Activated B cell treated with CpG ODN at 0.5 μM for 24 hours (primary cell): ENCODE measurements at regions of chr1 and their contacts with region 1.

Region 1: GRCh38 chr1:43974443-43975248 is at the start of gene ATP6V0B:
- DNase-seq: peak; percentile 91
- ATAC-seq: peak; percentile 70
- H3K4me3 Mint-ChIP-seq: peak within 1 kb of the TSS; percentile 92
- H3K27ac Mint-ChIP-seq: peak within 1 kb of the TSS; percentile 91
- H3K4me1 Mint-ChIP-seq: peaks cover 65% of the 10 kb centered on the region
- H3K27me3 Mint-ChIP-seq: no peaks in the 10 kb centered on the region
- CTCF ChIP-seq: no peak
- total RNA-seq, gene ATP6V0B: 75.5 and 80.9 TPM in 2 replicates

Region 2: DNA sequence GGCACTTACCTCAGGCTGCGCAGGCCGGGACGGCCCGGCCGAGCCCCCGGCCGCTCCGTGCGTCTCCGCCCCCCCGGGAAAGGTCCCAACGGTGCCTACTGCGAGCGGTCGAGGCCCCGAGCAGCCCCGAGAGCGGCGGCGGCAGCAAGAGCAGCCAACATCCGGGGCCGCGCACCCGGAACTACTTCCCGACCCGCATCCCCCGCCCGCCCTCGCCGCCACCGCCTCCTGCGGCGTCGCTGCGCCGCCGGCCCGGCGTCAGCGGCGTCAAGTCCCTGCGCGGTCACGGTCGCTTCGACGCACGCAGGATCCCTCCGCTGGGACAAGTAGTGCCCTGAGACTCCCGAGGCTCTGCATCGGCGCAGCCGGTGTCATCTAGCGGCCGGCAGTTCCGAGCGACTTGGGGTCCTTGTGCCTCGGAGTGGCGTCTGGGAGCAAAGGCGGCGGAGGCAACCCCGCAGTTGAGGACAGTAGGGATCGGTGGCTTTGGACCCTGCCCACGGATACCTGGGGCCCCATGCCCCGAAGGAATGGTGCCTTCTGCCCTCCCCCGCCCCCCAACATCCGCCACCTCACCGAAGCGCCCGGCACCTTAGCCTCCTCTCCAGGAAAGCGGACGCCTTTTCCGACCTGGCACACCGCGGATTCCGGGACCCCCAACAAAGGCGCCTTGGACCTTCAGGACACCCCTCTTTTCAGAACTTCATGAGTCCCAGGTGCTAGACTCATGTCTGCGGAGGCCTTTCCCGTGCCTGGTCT is 1639.4 kb before region 1 on chr1 and contains the start of gene FOXJ3:
- CTCF ChIA-PET with region 1: no interaction called
- POLR2A ChIA-PET with region 1: no interaction called
- intact Hi-C with region 1: loop called (anchors 10 kb)
- DNase-seq: peak; percentile 91
- ATAC-seq: peak; percentile 92
- H3K4me3 Mint-ChIP-seq: peak within 1 kb of the TSS; percentile 93
- H3K27ac Mint-ChIP-seq: peak within 1 kb of the TSS; percentile 86
- H3K4me1 Mint-ChIP-seq: peaks cover 41% of the 10 kb centered on the region
- H3K27me3 Mint-ChIP-seq: no peaks in the 10 kb centered on the region
- CTCF ChIP-seq: no peak
- total RNA-seq, gene FOXJ3: 54.7 and 63.9 TPM in 2 replicates

Region 3: DNA sequence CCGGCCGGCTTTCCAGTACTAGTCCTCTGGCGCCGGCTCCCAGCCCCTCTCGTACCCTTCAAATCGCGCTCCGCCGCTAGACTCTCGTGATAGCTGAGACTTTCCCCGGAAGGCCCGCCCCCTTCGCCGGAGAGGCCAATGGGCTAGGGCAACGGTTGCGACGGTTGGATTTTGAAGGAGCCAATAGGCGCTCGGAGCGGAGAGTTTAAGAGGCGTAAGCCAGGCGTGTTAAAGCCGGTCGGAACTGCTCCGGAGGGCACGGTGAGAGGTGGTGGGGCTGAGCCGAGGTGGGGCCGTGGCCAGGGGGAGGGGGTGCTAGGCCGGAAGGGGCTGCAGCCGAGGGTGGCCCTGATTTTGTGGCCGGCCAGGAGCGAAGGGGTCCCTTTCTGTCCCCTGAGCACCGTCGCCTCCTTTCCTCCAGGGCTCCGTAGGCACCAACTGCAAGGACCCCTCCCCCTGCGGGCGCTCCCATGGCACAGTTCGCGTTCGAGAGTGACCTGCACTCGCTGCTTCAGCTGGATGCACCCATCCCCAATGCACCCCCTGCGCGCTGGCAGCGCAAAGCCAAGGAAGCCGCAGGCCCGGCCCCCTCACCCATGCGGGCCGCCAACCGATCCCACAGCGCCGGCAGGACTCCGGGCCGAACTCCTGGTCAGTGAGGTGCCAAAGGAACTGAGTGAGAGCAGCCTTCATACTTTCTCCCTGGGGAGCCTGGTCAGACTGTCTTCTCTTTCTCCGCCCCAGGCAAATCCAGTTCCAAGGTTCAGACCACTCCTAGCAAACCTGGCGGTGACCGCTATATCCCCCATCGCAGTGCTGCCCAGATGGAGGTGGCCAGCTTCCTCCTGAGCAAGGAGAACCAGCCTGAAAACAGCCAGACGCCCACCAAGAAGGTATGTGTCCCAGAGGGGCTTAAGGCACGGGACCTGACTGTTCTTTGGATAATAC is 615.6 kb before region 1 on chr1 and contains the start of gene CDC20:
- CTCF ChIA-PET with region 1: no interaction called
- POLR2A ChIA-PET with region 1: no interaction called
- intact Hi-C with region 1: loop called (anchors 10 kb)
- DNase-seq: peak; percentile 96
- ATAC-seq: peak; percentile 99
- H3K4me3 Mint-ChIP-seq: peak within 1 kb of the TSS; percentile 91
- H3K27ac Mint-ChIP-seq: peak within 1 kb of the TSS; percentile 91
- H3K4me1 Mint-ChIP-seq: peaks cover 16% of the 10 kb centered on the region
- H3K27me3 Mint-ChIP-seq: no peaks in the 10 kb centered on the region
- CTCF ChIP-seq: no peak
- total RNA-seq, gene CDC20: 3.2 and 4.2 TPM in 2 replicates

Region 4: GRCh38 chr1:43991476-43992231 is 17.0 kb after region 1 on chr1 and contains the start of gene CCDC24:
- CTCF ChIA-PET with region 1: interaction called, 3 read pairs
- POLR2A ChIA-PET with region 1: interaction called, 23 read pairs
- intact Hi-C with region 1: loop called (anchors 1 kb)
- DNase-seq: peak; percentile 82
- ATAC-seq: peak; percentile 86
- H3K4me3 Mint-ChIP-seq: peak within 1 kb of the TSS; percentile 96
- H3K27ac Mint-ChIP-seq: peak within 1 kb of the TSS; percentile 88
- H3K4me1 Mint-ChIP-seq: peaks cover 36% of the 10 kb centered on the region
- H3K27me3 Mint-ChIP-seq: no peaks in the 10 kb centered on the region
- CTCF ChIP-seq: no peak
- total RNA-seq, gene CCDC24: 8.1 and 15.1 TPM in 2 replicates

Region 5: GRCh38 chr1:44213222-44214112 is 238.8 kb after region 1 on chr1 and contains the start of gene DMAP1:
- CTCF ChIA-PET with region 1: no interaction called
- POLR2A ChIA-PET with region 1: interaction called, 6 read pairs
- intact Hi-C with region 1: loop called (anchors 10 kb)
- DNase-seq: peak; percentile 87
- ATAC-seq: peak; percentile 83
- H3K4me3 Mint-ChIP-seq: peak within 1 kb of the TSS; percentile 95
- H3K27ac Mint-ChIP-seq: peak within 1 kb of the TSS; percentile 91
- H3K4me1 Mint-ChIP-seq: peaks cover 38% of the 10 kb centered on the region
- H3K27me3 Mint-ChIP-seq: no peaks in the 10 kb centered on the region
- CTCF ChIP-seq: no peak
- total RNA-seq, gene DMAP1: 59.6 and 64.7 TPM in 2 replicates